ENCODE measurements at regions of chr11 and their contacts with region 1.

Region 1: GRCh38 chr11:57741132-57742086 is at the start of gene SELENOH:
- H3K4me3 Mint-ChIP-seq: peak within 1 kb of the TSS; percentile 89
- H3K27ac Mint-ChIP-seq: peak within 1 kb of the TSS; percentile 99
- H3K4me1 Mint-ChIP-seq: peaks cover 19% of the 10 kb centered on the region
- H3K27me3 Mint-ChIP-seq: no peaks in the 10 kb centered on the region

Region 2: GRCh38 chr11:57657194-57658022 is 84.0 kb before region 1 on chr11 and contains the start of gene CLP1:
- intact Hi-C with region 1: loop called (anchors 1 kb)
- H3K4me3 Mint-ChIP-seq: peak within 1 kb of the TSS; percentile 99
- H3K27ac Mint-ChIP-seq: peak within 1 kb of the TSS; percentile 92
- H3K4me1 Mint-ChIP-seq: peaks cover 51% of the 10 kb centered on the region
- H3K27me3 Mint-ChIP-seq: no peaks in the 10 kb centered on the region

Region 3: GRCh38 chr11:57778318-57779037 is 37.1 kb after region 1 on chr11:
- intact Hi-C with region 1: no loop called
- H3K4me3 Mint-ChIP-seq: no peak overlapping the region
- H3K27ac Mint-ChIP-seq: peak overlapping the region; percentile 51
- H3K4me1 Mint-ChIP-seq: peaks cover 93% of the 10 kb centered on the region
- H3K27me3 Mint-ChIP-seq: no peaks in the 10 kb centered on the region